ENCODE measurements at regions of chr1 and their contacts with region 1.

Region 1: DNA sequence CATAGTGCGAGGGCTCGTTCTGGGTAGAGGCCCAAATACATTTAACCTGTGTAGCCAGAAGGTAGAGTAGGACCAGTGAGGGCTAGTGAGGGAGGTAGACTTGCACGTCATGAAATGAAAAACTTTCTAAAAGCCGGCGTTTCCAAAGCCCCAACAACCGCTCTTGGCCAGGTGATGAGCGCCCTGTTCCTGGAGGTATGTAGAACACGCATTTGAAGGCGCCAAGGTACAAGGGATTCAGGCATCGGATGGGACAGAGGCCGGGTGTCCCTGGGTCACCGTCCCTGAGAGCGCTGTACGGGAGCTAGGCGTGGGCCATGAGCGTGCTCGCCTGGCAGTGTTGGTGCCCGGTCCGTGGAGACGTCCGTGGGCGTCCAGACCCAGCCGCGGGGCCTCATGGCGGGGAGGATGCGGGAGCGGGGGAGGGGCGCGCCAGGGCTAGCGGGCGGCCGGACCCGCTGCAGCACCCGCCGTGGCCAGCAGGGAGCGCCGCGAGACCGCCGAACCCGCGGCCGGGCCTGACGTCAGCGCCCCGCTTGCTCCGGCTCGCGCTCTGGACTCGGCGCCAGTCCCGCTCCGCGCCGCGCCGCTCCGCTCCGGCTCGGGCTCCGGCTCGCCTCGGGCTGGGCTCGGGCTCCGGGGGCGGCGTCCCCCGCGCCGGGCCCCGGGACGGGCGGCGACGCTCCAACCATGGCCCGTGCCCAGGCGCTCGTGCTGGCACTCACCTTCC is at the start of gene PTPRU:
- DNase-seq: peak; percentile 85 to 97 (median 94)
- ATAC-seq: peak; percentile 96
- H3K4me3 ChIP-seq: peak within 1 kb of the TSS; percentile 44
- H3K27ac ChIP-seq: no peak within 1 kb of the TSS
- H3K4me1 ChIP-seq: peaks cover 5 to 27% of the 10 kb centered on the region in 2 experiments; a peak in 3 of 5 replicates
- H3K27me3 ChIP-seq: peaks cover 23 to 30% of the 10 kb centered on the region in 2 experiments; a peak in 4 of 5 replicates
- CTCF ChIP-seq: peak; percentile 57 to 95 (median 91)
- EP300 ChIP-seq: no peak
- POLR2A ChIP-seq: no peak
- RAD21 ChIP-seq: peak; percentile 93 to 98
- polyA plus RNA-seq, gene PTPRU: 0.01 to 0.03 TPM

Region 2: GRCh38 chr1:29197585-29197924 is 38.6 kb before region 1 on chr1:
- CTCF ChIA-PET with region 1: no interaction called
- POLR2A ChIA-PET with region 1: no interaction called
- in situ Hi-C with region 1: no loop called
- intact Hi-C with region 1: no loop called
- DNase-seq: peak; percentile 44 to 71 (median 53)
- ATAC-seq: peak; percentile 94
- H3K4me3 ChIP-seq: no peak overlapping the region
- H3K27ac ChIP-seq: no peak overlapping the region
- H3K4me1 ChIP-seq: peaks cover 17 to 18% of the 10 kb centered on the region in 2 experiments
- H3K27me3 ChIP-seq: no peaks in the 10 kb centered on the region
- CTCF ChIP-seq: peak; percentile 65 to 79 (median 75)
- EP300 ChIP-seq: no peak
- POLR2A ChIP-seq: no peak
- RAD21 ChIP-seq: peak; percentile 61 to 83; a peak in 3 of 4 replicates

Region 3: GRCh38 chr1:29319300-29320110 is 83.4 kb after region 1 on chr1:
- CTCF ChIA-PET with region 1: no interaction called
- POLR2A ChIA-PET with region 1: interaction called, 5 read pairs
- in situ Hi-C with region 1: no loop called
- intact Hi-C with region 1: loop called (anchors 5 kb)
- DNase-seq: no peak
- ATAC-seq: no peak
- H3K4me3 ChIP-seq: no peak overlapping the region
- H3K27ac ChIP-seq: no peak overlapping the region
- H3K4me1 ChIP-seq: peaks cover 0 to 18% of the 10 kb centered on the region in 2 experiments; a peak in 2 of 5 replicates
- H3K27me3 ChIP-seq: peaks cover 28 to 50% of the 10 kb centered on the region in 2 experiments
- CTCF ChIP-seq: no peak
- EP300 ChIP-seq: no peak
- POLR2A ChIP-seq: no peak
- RAD21 ChIP-seq: no peak

Region 4: GRCh38 chr1:29849038-29849750 is 613.1 kb after region 1 on chr1:
- CTCF ChIA-PET with region 1: interaction called, 3 read pairs
- POLR2A ChIA-PET with region 1: no interaction called
- in situ Hi-C with region 1: loop called (anchors 5 kb)
- intact Hi-C with region 1: no loop called
- DNase-seq: peak; percentile 33 to 56 (median 48)
- ATAC-seq: peak; percentile 78
- H3K4me3 ChIP-seq: no peak overlapping the region
- H3K27ac ChIP-seq: no peak overlapping the region
- H3K4me1 ChIP-seq: no peaks in the 10 kb centered on the region
- H3K27me3 ChIP-seq: peaks cover 0 to 23% of the 10 kb centered on the region in 2 experiments; a peak in 2 of 5 replicates
- CTCF ChIP-seq: peak; percentile 63 to 71 (median 68)
- EP300 ChIP-seq: no peak
- POLR2A ChIP-seq: no peak
- RAD21 ChIP-seq: peak; percentile 42 to 58